GM18951 (cell line): ENCODE measurements at regions of chr2 and their contacts with region 1.

Region 1: GRCh38 chr2:188524519-188525113 is 232.9 kb downstream of the GULP1 start:
- POLR2A ChIP-seq: no peak

Region 2: GRCh38 chr2:188369365-188369764 is 155.3 kb before region 1 on chr2:
- in situ Hi-C with region 1: no loop called
- POLR2A ChIP-seq: no peak

Region 3: DNA sequence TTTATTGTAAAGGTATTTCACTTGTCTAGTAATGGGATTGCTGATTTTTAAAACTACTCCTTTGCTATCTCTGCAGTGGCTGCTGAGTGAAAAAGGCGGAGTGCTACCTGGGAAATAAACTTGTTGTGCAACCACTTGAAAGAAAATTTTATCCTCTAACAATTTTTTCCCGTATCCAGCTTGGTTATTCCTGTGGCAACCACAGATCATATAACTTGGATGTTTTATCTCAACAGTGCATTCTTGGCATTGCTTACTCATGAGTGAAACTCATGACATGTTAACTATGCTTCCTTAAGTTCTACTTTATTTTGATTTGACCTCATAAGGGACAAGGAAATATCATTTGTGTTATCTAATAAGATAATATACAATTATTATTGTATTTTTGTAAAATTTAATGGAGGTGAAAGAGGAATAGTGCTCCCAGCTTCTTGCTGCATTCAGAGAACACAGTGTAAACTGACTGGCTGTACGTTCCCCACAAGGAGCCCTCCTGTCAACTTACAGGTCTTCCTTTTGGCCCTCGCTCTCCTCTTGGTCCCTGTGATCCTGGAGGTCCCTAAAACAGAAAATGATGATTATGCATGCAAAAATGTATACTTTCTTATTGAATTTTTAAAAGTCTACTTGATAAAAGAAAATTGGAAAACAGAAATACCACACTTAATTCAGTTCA is 572.3 kb after region 1 on chr2:
- in situ Hi-C with region 1: loop called (anchors 10 kb)
- POLR2A ChIP-seq: no peak

Region 4: DNA sequence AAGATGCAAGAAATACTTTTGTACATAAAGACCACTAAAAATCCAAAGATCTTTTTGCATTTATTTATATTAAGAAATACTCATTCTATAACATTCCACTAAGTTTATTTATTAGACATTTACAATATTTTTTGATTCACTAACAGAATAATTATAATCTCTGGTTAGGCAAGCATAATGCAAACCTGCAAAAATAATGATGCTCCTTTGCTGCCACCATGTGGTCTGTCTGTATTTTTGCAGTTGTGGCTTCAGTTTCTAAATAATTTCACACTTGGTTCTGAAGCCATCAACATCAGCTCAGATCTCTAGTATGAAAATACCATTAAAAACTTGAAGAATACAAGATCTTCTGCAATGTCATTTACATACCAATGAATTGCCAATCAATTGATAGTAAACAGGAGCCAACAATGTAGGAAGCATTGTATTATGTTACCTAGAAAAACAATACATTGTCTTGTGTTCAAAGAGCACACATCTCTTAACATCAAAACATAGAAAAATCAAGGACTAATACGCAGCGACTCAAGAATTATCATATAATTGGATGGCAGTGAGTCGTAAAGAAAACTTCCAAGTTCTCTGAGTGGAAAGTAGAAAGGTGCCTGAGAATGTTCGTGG is 887.8 kb after region 1 on chr2:
- in situ Hi-C with region 1: loop called (anchors 25 kb)
- POLR2A ChIP-seq: no peak